ENCODE measurements at regions of chr2 and their contacts with region 1.

Region 1: DNA sequence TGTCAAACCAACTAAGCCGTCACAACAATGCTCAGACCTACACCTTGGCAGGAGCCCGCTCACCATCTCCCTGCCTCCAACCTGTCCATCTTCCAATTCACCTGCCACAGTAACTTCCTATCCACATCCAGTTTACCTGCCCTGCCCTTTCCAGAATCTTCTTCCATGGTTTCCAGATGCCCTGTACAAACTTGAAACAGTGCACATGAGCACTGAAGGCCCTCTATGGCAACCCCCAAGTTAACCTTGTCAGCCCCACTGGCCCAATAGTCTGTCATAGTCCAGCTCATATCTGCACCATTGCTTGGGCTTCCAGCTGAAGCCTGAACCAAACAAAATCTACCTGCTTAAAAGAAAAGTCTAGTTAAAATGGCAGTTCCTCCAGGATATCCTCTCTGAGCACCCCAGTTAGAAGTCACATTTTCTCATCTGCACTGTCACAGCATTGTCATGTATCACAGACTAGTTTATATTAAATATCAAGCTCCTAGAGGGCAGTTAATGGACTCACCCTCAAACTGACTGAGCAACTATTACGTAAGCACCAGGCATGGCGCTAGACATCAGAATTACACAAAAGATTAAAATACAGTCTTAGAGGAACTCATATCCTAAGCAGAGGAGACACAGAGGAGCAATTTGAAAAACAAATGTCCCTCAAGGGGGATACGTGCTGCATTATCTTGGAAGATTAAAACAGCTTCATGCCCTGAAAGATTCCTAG is 11.6 kb downstream of the NFE2L2 start:
- DNase-seq: no peak
- H3K4me3 Mint-ChIP-seq: no peak overlapping the region
- H3K27ac Mint-ChIP-seq: peak overlapping the region; percentile 88
- H3K4me1 Mint-ChIP-seq: peaks cover 88% of the 10 kb centered on the region
- H3K27me3 Mint-ChIP-seq: no peaks in the 10 kb centered on the region

Region 2: DNA sequence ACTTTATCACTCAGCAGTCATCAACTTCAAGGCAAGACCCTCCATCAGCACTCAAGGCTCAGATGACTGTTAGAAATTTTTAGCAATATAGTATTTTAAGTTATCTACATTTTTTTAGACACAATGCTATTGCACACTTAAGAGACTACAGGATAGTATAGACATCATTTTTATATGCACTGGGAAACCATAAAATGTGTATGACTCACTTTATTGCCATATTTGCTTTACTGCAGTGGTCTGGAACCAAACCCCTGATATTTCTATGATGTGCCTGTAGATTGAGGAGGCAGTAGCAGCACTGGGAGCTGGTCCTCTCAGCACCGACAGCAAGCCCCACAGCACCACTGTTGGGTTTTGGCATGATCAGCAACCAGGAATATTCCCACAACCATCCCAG is 305.2 kb before region 1 on chr2:
- CTCF ChIA-PET with region 1: no interaction called
- intact Hi-C with region 1: no loop called
- DNase-seq: no peak
- H3K4me3 Mint-ChIP-seq: no peak overlapping the region
- H3K27ac Mint-ChIP-seq: no peak overlapping the region
- H3K4me1 Mint-ChIP-seq: no peaks in the 10 kb centered on the region
- H3K27me3 Mint-ChIP-seq: no peaks in the 10 kb centered on the region

Region 3: DNA sequence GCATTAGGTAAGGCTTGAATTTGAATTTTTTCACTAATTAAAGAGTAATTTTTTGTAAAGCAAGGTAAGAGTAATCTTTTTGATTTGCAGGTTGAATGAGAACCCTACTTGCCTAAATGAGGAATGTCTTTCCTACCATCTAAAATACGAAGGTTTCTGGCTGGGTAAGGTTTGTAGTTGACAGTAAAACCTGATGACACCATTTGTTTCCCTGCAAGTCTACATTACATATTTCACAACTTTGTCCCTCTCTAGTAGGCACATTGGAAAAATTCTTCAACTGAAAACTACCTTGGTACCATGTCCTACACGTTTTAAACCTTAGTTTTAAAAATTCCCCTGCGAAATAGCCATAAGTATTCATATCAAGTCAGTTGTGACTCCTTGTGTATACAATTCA is 31.0 kb before region 1 on chr2:
- CTCF ChIA-PET with region 1: no interaction called
- intact Hi-C with region 1: loop called (anchors 2 kb)
- DNase-seq: no peak
- H3K4me3 Mint-ChIP-seq: no peak overlapping the region
- H3K27ac Mint-ChIP-seq: peak overlapping the region; percentile 68
- H3K4me1 Mint-ChIP-seq: peaks cover 41% of the 10 kb centered on the region
- H3K27me3 Mint-ChIP-seq: no peaks in the 10 kb centered on the region

Region 4: DNA sequence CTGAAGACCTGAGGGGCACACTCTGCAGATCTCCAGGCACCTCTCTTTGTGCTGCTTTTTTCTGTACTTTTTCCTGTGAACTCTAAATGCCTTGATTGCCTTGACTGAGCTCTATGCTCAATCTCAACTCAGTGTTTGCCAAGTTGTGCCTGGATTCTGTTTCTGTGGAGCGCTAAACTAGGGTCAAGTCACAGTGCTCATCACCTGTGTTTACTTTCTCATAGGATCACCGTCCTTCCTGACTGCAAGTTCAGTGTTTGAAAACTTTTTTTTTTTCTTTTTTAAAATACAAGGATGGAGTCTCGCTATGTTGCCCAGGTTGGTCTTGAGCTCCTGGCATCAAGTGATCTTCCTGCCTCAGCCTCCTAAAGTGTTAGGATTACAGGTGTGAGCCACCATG is 202.2 kb after region 1 on chr2:
- CTCF ChIA-PET with region 1: no interaction called
- intact Hi-C with region 1: no loop called
- DNase-seq: no peak
- H3K4me3 Mint-ChIP-seq: no peak overlapping the region
- H3K27ac Mint-ChIP-seq: no peak overlapping the region
- H3K4me1 Mint-ChIP-seq: no peaks in the 10 kb centered on the region
- H3K27me3 Mint-ChIP-seq: no peaks in the 10 kb centered on the region

Region 5: DNA sequence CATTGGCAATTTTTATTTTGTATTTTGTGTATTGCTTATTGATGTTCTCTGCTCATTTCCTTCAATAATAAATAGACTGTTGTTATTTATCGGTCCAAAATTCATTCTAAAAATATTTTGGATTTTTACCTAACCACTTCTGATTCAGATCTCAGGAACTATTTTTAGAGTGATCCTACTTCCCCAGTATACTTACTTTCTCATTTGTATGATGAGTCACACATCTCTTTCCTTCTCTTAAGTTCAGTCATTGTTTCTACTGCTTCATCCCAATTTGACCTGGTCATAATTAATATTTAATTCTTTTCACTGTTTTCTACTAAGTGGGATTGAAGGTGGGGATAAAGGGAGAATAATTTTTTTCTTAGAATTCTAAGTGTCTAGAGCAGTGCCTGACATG is 214.7 kb after region 1 on chr2:
- CTCF ChIA-PET with region 1: no interaction called
- intact Hi-C with region 1: no loop called
- DNase-seq: no peak
- H3K4me3 Mint-ChIP-seq: no peak overlapping the region
- H3K27ac Mint-ChIP-seq: no peak overlapping the region
- H3K4me1 Mint-ChIP-seq: peaks cover 4% of the 10 kb centered on the region
- H3K27me3 Mint-ChIP-seq: no peaks in the 10 kb centered on the region

Region 6: GRCh38 chr2:177666408-177666807 is 413.4 kb after region 1 on chr2:
- CTCF ChIA-PET with region 1: no interaction called
- intact Hi-C with region 1: no loop called
- DNase-seq: no peak
- H3K4me3 Mint-ChIP-seq: no peak overlapping the region
- H3K27ac Mint-ChIP-seq: no peak overlapping the region
- H3K4me1 Mint-ChIP-seq: peaks cover 8% of the 10 kb centered on the region
- H3K27me3 Mint-ChIP-seq: peaks cover 5% of the 10 kb centered on the region